Activated CD8-positive, alpha-beta T cell treated with anti-CD3 and anti-CD28 coated beads, Interleukin-2, amount 10 ng/mL, durations not matched to agents 7 days and 5 days (primary cell): ENCODE measurements at regions of chr10 and their contacts with region 1.

Region 1: DNA sequence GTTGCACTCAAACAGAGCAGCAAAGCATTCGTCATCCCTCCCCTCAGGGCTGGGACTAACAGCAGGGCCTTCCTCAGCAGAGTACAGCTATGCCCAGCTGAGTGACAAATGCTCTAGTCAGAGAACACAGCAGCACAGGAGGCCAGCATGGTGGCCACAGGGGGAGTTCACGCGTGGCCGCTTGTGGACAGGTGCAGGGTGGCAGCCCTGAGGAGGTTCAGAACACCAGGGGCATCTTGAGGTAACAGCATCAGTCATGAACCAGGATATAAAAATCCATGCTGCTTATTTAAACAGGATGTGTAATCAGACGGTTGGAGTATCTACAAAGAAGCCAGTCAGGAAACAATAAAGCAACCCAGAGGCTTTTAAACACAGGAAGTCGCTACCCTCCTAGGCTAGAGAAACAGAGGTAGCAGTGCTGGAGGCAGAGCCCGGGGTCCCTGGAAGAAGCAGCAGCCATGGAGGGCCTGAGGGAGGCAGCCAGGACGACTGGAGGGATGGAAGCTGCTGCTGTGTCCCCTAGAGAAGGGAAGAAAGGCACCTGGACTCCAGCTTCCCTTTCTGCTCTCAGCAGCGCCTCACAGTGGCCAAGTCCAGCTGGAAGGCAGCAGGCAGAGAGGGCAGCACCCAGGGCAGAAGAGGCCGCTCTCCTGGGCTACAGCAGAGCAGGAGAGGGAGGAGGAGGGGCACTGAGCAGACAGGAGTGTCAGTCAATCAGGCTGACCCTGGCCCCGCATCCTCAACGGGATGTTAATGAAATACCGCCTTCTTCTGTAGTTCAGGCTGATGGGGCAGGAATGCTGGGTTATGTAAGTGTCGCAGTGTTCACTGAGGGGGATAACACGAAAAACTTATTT is 70.8 kb upstream of the UCN3 start:
- DNase-seq: peak; percentile 81
- ATAC-seq: peak; percentile 67
- H3K4me3 Mint-ChIP-seq: peak overlapping the region; percentile 85
- H3K27ac Mint-ChIP-seq: peak overlapping the region; percentile 99
- H3K4me1 Mint-ChIP-seq: peaks cover 84% of the 10 kb centered on the region
- H3K27me3 Mint-ChIP-seq: no peaks in the 10 kb centered on the region

Region 2: DNA sequence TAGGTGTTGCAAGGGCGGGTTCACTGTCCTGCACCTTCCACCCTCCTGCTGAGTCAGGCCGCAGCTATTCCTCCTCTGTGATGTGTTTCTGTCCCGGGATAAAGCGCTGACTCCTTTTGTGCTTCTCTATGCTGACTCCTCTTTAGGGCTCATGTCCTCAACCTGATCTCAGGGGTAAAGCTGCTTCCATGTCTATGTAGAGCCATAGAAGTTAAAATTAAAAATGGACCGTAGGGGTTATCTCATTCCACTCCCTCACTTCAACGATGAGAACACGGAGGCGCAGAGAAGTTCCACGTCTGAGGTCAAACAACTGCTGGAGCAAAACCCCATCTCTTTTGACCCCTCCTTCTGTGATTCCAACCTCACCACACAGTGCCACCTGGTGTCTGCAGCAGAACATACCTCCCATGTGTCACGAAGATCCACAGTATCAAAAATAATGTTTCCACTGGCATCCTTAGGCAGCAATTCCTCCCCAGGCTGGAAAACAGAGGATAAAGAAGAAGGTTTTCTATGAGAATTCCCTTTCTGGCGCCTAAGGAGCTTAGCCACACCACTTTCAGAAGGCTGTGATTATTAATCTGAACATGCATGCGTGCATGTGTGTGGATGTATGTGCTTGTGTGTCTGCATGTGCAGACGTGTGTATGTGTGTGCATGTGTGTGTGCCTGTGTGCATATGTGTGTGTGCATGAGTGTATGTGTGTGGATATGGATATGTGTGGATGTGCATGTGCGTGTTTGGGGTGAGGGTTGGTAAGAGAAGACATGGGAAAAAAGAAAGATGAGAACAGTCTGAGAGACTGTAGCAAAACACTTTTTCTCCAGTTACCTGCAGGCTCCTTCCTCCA is 10.4 kb before region 1 on chr10:
- CTCF ChIA-PET with region 1: interaction called, 24 read pairs
- POLR2A ChIA-PET with region 1: interaction called, 6 read pairs
- DNase-seq: peak; percentile 78
- ATAC-seq: peak; percentile 86
- H3K4me3 Mint-ChIP-seq: no peak overlapping the region
- H3K27ac Mint-ChIP-seq: peak overlapping the region; percentile 85
- H3K4me1 Mint-ChIP-seq: peaks cover 27% of the 10 kb centered on the region
- H3K27me3 Mint-ChIP-seq: peaks cover 4% of the 10 kb centered on the region